ENCODE measurements at regions of chr3 and their contacts with region 1.

Region 1: GRCh38 chr3:56801662-56802377 is at the start of gene ARHGEF3:
- DNase-seq: peak; percentile 82 to 89
- ATAC-seq: peak; percentile 96
- total RNA-seq, gene ARHGEF3: 14.8 to 20.0 TPM

Region 2: GRCh38 chr3:56536735-56537134 is 265.1 kb before region 1 on chr3:
- intact Hi-C with region 1: no loop called
- DNase-seq: no peak
- ATAC-seq: no peak

Region 3: GRCh38 chr3:56702490-56703315 is 99.1 kb before region 1 on chr3:
- intact Hi-C with region 1: loop called (anchors 5 to 10 kb)
- DNase-seq: peak in 1 of 2 donors; percentile 25
- ATAC-seq: peak; percentile 76

Region 4: DNA sequence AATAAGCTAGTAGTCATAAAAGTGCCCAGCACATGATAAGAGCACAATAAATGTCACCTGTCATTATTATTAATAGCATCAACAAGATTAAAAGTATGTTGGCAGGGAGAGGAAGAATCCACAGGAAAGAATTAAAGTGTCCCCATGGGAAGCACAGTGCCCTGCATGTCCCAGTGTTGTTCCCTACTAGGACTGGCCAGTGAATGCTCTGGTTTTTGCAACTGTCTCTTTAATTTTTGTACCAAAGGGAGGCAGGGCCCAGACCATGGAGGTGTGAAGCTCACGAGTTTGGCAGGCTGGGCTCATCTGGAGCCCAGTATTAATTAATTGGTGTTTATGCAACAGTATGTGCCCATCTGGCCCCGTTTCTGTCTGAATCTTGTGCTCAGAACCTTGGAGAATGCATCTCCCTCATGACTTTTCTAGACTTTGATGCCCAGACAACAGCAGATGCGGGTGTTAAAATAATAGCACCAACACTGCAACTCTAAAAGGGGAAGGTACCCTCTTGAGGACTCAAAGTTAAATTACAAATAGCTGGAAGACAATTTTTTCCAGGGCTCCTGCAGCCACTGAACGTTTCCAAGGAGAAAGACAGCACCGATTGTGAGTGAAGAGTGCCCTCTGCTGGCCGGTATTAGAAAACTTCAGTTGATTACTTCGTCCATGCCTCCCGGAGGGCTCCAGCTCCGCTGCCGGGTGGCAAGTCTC is 186.8 kb after region 1 on chr3:
- intact Hi-C with region 1: loop called in 1 of 2 experiments (anchors 5 kb)
- DNase-seq: peak; percentile 71 to 79
- ATAC-seq: peak; percentile 55